CD8-positive, alpha-beta memory T cell (primary cell): ENCODE measurements at regions of chr17 and their contacts with region 1.

Region 1: DNA sequence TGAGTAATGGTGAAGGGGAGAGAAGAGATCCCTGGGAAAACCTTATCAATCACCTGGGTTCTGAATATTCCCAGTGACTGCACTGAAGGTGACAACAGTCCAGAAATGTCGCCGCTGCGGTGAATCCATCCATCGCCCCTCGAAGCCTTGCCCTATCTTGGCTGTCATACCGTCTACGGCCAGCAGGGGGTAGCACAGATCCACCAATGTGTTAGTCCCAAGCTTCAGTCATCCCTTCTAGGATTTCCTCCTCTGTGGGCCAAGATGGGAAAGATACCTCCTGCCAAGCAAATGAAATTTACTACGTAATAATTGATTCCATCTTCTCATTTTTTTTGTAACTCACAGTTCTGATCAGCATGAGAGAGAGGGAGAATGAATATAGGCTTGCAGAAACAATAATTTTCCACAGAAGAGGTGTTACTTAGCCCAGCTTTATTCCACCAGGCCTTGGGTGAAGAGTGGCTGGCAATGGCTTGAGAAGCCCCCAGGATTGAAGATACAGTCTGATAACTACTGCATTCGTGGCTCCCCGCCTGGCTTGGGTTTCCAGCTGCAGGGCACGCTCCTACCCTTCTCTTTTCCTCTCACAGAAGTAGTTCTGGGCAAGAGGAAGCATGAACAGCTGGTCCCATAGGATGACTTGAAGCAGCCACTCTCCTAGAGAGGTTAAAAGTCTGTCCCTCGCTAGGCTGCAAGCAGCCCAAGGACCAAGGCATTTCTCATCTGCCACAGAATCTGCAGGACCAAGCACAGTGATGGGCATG is 2.6 kb upstream of the FMNL1 start:
- DNase-seq: peak; percentile 73 to 88 (median 82)
- H3K4me3 ChIP-seq: peak overlapping the region; percentile 24
- H3K4me3 Mint-ChIP-seq: peak overlapping the region; percentile 70 to 93 (median 90)
- H3K27ac ChIP-seq: no peak overlapping the region
- H3K27ac Mint-ChIP-seq: peak overlapping the region; percentile 60 to 97 (median 90)
- H3K4me1 ChIP-seq: peaks cover 24% of the 10 kb centered on the region
- H3K4me1 Mint-ChIP-seq: peaks cover 32 to 46% (median 34%) of the 10 kb centered on the region in 3 donors
- H3K27me3 ChIP-seq: no peaks in the 10 kb centered on the region
- H3K27me3 Mint-ChIP-seq: no peaks in the 10 kb centered on the region

Region 2: DNA sequence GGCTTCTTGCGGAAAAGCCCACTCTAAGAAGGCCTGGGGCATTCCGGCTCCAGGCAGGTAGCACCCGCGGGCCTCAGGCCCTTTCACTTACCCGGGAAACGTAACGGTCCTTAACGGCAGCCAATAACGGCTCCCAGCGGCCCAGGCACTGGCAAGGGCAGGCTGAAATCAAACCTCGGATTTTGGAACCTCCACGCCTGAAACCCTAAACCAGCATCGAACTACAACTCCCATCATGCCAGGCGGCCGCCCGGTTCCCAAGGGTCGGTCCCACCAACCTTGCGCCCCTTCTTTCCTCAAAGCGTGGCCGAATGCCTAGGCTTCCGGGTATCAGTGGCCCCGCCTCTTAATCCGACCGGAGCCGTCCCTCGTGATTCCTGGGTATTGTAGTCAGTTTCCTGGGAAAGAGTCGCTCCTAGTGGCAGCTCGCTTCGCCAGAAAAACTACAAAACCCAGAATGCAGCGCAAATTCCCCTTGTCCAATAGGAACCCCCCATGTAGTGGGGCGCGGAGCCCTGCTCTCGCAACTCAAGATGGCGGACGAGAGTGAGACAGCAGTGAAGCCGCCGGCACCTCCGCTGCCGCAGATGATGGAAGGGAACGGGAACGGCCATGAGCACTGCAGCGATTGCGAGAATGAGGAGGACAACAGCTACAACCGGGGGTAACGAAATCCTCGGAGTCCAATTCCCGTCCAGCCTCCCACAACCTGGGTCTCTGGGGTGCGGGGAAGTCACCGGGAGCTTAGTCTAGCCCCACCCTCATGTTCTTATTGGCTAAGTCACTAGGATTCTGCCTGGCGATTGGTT is 158.1 kb before region 1 on chr17 and contains the start of gene NMT1:
- CTCF ChIA-PET with region 1: no interaction called
- POLR2A ChIA-PET with region 1: no interaction called
- DNase-seq: peak; percentile 91 to 99 (median 97)
- H3K4me3 ChIP-seq: peak within 1 kb of the TSS; percentile 85
- H3K4me3 Mint-ChIP-seq: peak within 1 kb of the TSS; percentile 95 to 100 (median 99)
- H3K27ac ChIP-seq: peak within 1 kb of the TSS; percentile 84
- H3K27ac Mint-ChIP-seq: peak within 1 kb of the TSS; percentile 92 to 100 (median 99)
- H3K4me1 ChIP-seq: peaks cover 38% of the 10 kb centered on the region
- H3K4me1 Mint-ChIP-seq: peaks cover 35 to 62% (median 53%) of the 10 kb centered on the region in 3 donors
- H3K27me3 ChIP-seq: no peaks in the 10 kb centered on the region
- H3K27me3 Mint-ChIP-seq: peaks cover 0 to 2% of the 10 kb centered on the region in 2 donors
- total RNA-seq, gene NMT1: 189 to 198 TPM

Region 3: GRCh38 chr17:45135192-45135977 is 83.7 kb before region 1 on chr17 and contains the start of gene ACBD4:
- CTCF ChIA-PET with region 1: interaction called, 21 read pairs
- POLR2A ChIA-PET with region 1: no interaction called
- DNase-seq: peak; percentile 95 to 98 (median 96)
- H3K4me3 ChIP-seq: peak within 1 kb of the TSS; percentile 78
- H3K4me3 Mint-ChIP-seq: peak within 1 kb of the TSS; percentile 87 to 95 (median 89)
- H3K27ac ChIP-seq: peak within 1 kb of the TSS; percentile 43
- H3K27ac Mint-ChIP-seq: peak within 1 kb of the TSS; percentile 66 to 86 (median 83)
- H3K4me1 ChIP-seq: peaks cover 14% of the 10 kb centered on the region
- H3K4me1 Mint-ChIP-seq: peaks cover 15 to 35% (median 20%) of the 10 kb centered on the region in 3 donors
- H3K27me3 ChIP-seq: no peaks in the 10 kb centered on the region
- H3K27me3 Mint-ChIP-seq: peaks cover 0 to 4% of the 10 kb centered on the region in 2 donors
- total RNA-seq, gene ACBD4: 8.8 to 9.7 TPM

Region 4: GRCh38 chr17:45184144-45184543 is 34.9 kb before region 1 on chr17:
- CTCF ChIA-PET with region 1: no interaction called
- POLR2A ChIA-PET with region 1: no interaction called
- DNase-seq: no peak
- H3K4me3 ChIP-seq: no peak overlapping the region
- H3K4me3 Mint-ChIP-seq: no peak overlapping the region
- H3K27ac ChIP-seq: no peak overlapping the region
- H3K27ac Mint-ChIP-seq: no peak overlapping the region
- H3K4me1 ChIP-seq: no peaks in the 10 kb centered on the region
- H3K4me1 Mint-ChIP-seq: no peaks in the 10 kb centered on the region
- H3K27me3 ChIP-seq: no peaks in the 10 kb centered on the region
- H3K27me3 Mint-ChIP-seq: no peaks in the 10 kb centered on the region

Region 5: DNA sequence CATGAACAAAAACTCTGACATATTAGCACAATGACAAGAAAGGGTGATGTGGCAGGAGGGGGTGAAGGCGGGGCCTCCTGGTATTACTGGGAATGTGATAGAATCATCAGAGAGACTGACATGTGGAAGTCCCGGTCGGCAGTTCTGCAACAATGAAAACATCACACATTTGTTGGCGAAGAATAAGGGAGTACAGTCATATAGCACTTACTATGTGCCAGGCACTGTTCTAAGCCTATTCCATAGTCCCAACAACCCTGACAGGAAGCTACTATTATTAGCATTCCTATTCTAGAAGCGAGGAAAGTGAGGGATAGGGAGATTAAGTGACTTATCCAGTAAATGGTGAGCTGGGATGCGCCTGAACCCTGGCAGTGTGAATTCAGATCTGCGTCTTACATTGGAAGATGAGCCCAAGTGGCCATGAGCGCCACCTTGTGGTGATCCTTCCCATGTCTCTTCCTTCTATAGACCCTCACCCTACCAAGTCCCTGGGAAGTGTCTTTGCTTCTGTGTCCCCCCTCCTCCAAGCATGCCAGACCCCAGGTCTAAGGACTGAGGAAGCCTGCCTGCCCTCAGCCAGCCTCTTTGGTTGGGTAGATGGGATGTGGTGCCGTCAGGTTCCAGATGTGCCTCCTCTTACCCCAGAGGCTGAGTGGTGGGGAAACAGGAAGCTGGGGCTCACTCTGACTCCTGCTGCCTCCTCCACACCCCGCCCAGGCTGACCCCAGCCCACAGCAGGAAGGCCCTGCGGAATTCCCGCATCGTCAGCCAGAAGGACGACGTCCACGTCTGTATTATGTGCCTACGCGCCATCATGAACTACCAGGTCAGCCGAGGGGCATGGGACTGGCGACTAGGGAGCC is 16.6 kb after region 1 on chr17:
- CTCF ChIA-PET with region 1: interaction called, 409 read pairs
- POLR2A ChIA-PET with region 1: interaction called, 189 read pairs
- DNase-seq: peak; percentile 69 to 84 (median 70)
- H3K4me3 ChIP-seq: no peak overlapping the region
- H3K4me3 Mint-ChIP-seq: peak overlapping the region in 5 of 7 donors; percentile 24 to 72 (median 30)
- H3K27ac ChIP-seq: no peak overlapping the region
- H3K27ac Mint-ChIP-seq: peak overlapping the region; percentile 79 to 98 (median 90)
- H3K4me1 ChIP-seq: peaks cover 35% of the 10 kb centered on the region
- H3K4me1 Mint-ChIP-seq: peaks cover 54 to 63% (median 59%) of the 10 kb centered on the region in 3 donors
- H3K27me3 ChIP-seq: no peaks in the 10 kb centered on the region
- H3K27me3 Mint-ChIP-seq: no peaks in the 10 kb centered on the region

Region 6: GRCh38 chr17:45261577-45262515 is 42.8 kb after region 1 on chr17 and contains the start of gene SPATA32:
- CTCF ChIA-PET with region 1: interaction called, 28 read pairs
- POLR2A ChIA-PET with region 1: no interaction called
- DNase-seq: peak; percentile 52 to 82 (median 67)
- H3K4me3 ChIP-seq: peak within 1 kb of the TSS; percentile 56
- H3K4me3 Mint-ChIP-seq: peak within 1 kb of the TSS; percentile 78 to 93 (median 84)
- H3K27ac ChIP-seq: peak within 1 kb of the TSS; percentile 12
- H3K27ac Mint-ChIP-seq: peak within 1 kb of the TSS; percentile 75 to 91 (median 78)
- H3K4me1 ChIP-seq: peaks cover 26% of the 10 kb centered on the region
- H3K4me1 Mint-ChIP-seq: peaks cover 11 to 28% (median 21%) of the 10 kb centered on the region in 3 donors
- H3K27me3 ChIP-seq: no peaks in the 10 kb centered on the region
- H3K27me3 Mint-ChIP-seq: no peaks in the 10 kb centered on the region
- total RNA-seq, gene SPATA32: 0.15 TPM in 1 of 2 experiments, not detected in the other

Region 7: DNA sequence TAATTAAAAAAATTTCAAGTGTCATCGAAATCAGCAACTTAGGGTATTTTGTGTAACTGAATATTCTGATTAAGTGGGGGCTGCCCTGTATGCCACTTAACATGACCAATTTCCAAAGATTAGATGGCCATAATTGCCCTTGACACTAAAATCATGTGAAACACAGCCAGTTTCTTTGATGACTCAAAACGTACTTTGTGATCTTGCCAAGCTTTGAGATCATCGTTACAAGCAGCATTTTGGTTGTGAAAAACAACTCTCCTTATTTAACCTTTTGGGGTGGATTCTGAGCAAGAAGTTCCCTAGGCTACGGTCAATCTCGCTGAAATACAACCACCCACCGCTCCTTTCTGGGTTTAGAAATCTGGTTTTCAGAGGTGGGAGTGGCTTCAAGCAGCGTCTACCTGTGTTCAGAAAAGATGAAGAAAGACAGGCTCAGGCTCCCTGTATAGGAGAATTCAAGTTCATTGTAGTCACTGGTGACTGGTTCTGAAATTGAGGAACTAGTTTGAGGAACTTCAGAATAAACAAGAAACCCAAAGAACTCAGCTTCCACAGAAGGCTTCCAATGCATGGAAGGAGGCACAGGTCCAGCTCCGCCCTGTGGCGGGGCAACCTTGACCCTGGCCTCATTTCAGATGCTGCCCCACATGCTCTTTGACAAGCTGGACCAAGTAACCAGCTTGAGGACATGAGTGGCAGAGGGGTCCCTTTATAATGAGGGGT is 88.4 kb after region 1 on chr17:
- CTCF ChIA-PET with region 1: interaction called, 12 read pairs
- POLR2A ChIA-PET with region 1: interaction called, 7 read pairs
- DNase-seq: peak in 1 of 5 donors; percentile 29
- H3K4me3 ChIP-seq: no peak overlapping the region
- H3K4me3 Mint-ChIP-seq: peak overlapping the region in 4 of 7 donors; percentile 29 to 60 (median 35)
- H3K27ac ChIP-seq: no peak overlapping the region
- H3K27ac Mint-ChIP-seq: peak overlapping the region in 7 of 8 donors; percentile 43 to 83 (median 78)
- H3K4me1 ChIP-seq: peaks cover 72% of the 10 kb centered on the region
- H3K4me1 Mint-ChIP-seq: peaks cover 73 to 88% (median 86%) of the 10 kb centered on the region in 3 donors
- H3K27me3 ChIP-seq: no peaks in the 10 kb centered on the region
- H3K27me3 Mint-ChIP-seq: no peaks in the 10 kb centered on the region

Region 8: GRCh38 chr17:45338023-45338781 is 119.1 kb after region 1 on chr17:
- CTCF ChIA-PET with region 1: no interaction called
- POLR2A ChIA-PET with region 1: no interaction called
- DNase-seq: no peak
- H3K4me3 ChIP-seq: no peak overlapping the region
- H3K4me3 Mint-ChIP-seq: no peak overlapping the region
- H3K27ac ChIP-seq: no peak overlapping the region
- H3K27ac Mint-ChIP-seq: no peak overlapping the region
- H3K4me1 ChIP-seq: no peaks in the 10 kb centered on the region
- H3K4me1 Mint-ChIP-seq: no peaks in the 10 kb centered on the region
- H3K27me3 ChIP-seq: no peaks in the 10 kb centered on the region
- H3K27me3 Mint-ChIP-seq: peaks cover 0 to 7% of the 10 kb centered on the region in 2 donors

Region 9: DNA sequence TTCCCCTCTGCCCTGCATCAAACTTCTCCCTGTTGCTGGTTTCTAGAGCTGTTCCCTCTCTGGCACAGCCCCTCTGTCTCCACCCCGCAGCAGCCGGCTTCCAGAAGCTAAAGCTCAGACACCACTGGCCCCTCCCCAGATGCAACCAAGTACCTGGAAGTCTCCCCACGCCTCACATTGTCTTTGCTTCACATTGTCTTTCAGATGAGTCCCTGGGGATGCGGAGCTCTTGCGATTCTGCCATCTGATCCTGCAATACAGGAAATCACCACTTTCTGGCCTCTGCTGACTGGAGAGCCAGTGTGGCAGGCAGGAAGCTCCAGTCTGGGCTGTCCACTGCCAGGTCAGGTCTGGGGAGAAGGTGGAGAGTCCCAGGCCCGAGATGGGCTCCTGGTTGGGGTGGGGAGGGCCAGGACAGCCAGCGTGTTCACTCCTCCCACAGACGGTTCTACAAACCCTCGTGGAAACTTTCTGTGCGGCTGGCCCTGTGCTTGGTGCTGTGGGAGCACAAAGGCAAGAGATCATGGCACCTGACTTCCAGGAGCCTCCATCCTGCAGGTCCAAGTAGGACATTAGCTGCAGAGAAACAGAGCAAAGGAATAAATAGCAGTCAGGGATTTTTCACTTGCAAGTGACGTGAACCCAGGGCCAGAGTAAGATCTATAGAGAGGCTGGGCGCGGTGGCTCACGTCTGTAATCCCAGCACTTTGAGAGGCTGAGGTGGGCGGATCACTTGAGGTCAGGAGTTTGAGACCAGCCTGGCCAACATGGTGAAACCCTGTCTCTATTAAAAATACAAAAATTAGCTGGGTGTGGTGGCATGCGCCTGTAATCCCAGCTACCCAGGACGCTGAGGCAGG is 145.7 kb after region 1 on chr17:
- CTCF ChIA-PET with region 1: no interaction called
- POLR2A ChIA-PET with region 1: no interaction called
- DNase-seq: no peak
- H3K4me3 ChIP-seq: no peak overlapping the region
- H3K4me3 Mint-ChIP-seq: no peak overlapping the region
- H3K27ac ChIP-seq: no peak overlapping the region
- H3K27ac Mint-ChIP-seq: no peak overlapping the region
- H3K4me1 ChIP-seq: no peaks in the 10 kb centered on the region
- H3K4me1 Mint-ChIP-seq: no peaks in the 10 kb centered on the region
- H3K27me3 ChIP-seq: peaks cover 4% of the 10 kb centered on the region
- H3K27me3 Mint-ChIP-seq: peaks cover 16 to 43% of the 10 kb centered on the region in 2 donors

Region 10: DNA sequence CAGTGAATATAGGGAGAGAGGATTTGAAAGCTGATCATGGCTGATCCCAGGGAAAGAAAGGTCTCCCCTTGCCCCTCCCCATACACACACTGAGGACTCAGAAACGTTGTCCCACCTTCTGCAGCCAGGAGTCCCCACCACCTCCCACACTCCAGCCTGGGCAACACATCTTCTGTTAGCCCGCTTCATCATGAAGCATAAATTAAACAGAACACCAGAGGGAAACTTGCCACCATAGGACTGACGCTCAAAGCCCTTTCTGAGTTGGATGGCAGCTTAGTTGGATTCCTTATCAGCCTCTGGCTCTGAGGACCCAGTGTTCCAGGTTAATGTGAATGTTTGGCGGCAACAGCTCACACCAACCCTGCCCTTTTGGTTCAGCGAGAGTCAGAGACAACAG is 179.7 kb after region 1 on chr17:
- CTCF ChIA-PET with region 1: interaction called, 10 read pairs
- POLR2A ChIA-PET with region 1: no interaction called
- DNase-seq: no peak
- H3K4me3 ChIP-seq: no peak overlapping the region
- H3K4me3 Mint-ChIP-seq: no peak overlapping the region
- H3K27ac ChIP-seq: no peak overlapping the region
- H3K27ac Mint-ChIP-seq: peak overlapping the region in 4 of 8 donors; percentile 26 to 69 (median 41)
- H3K4me1 ChIP-seq: no peaks in the 10 kb centered on the region
- H3K4me1 Mint-ChIP-seq: peaks cover 0 to 4% (median 2%) of the 10 kb centered on the region in 3 donors
- H3K27me3 ChIP-seq: no peaks in the 10 kb centered on the region
- H3K27me3 Mint-ChIP-seq: no peaks in the 10 kb centered on the region